HAP-1 (cell line): ENCODE measurements at regions of chr16 and their contacts with region 1.

Region 1: GRCh38 chr16:67672739-67673662 is 6.4 kb downstream of the C16orf86 start:
- DNase-seq: peak; percentile 36 to 85
- H3K4me3 ChIP-seq: no peak overlapping the region
- H3K4me1 ChIP-seq: peaks cover 3% of the 10 kb centered on the region; the same call in 1 of the 2 replicates
- H3K27me3 ChIP-seq: no peaks in the 10 kb centered on the region

Region 2: GRCh38 chr16:68040507-68041288 is 367.7 kb after region 1 on chr16:
- in situ Hi-C with region 1: loop called (anchors 10 kb)
- DNase-seq: peak; percentile 45 to 88
- H3K4me3 ChIP-seq: no peak overlapping the region
- H3K4me1 ChIP-seq: no peaks in the 10 kb centered on the region
- H3K27me3 ChIP-seq: no peaks in the 10 kb centered on the region